ENCODE measurements at regions of chr16 and their contacts with region 1.

Region 1: DNA sequence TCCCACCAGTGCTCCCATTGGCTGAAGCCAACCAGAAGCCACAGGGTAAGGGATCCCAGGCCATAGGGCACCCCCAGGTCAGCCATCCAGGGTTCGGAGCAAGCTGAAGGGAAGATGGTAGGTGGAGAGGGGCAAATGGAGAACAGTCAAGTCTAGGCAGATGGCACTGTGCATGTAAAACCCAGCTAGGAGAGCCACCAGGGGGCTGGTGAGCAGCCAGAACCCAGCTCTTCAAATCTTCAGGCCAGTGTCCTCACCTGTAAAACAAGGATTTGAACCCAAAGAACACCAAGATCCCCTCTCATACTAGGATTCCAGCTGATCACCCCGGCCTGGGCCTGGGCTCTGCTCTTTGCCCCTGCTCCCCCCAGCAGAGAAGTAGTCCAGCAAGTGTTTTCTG is 43.5 kb downstream of the GINS3 start:
- DNase-seq: no peak
- H3K4me3 ChIP-seq: no peak overlapping the region
- H3K27ac ChIP-seq: no peak overlapping the region
- H3K4me1 ChIP-seq: no peaks in the 10 kb centered on the region
- H3K27me3 ChIP-seq: no peaks in the 10 kb centered on the region
- CTCF ChIP-seq: peak; percentile 27 to 45 (median 40); a peak in 3 of 4 replicates
- EP300 ChIP-seq: no peak
- POLR2A ChIP-seq: no peak
- RAD21 ChIP-seq: peak; percentile 9 to 43; a peak in 3 of 4 replicates

Region 2: GRCh38 chr16:58392215-58393137 is 43.3 kb before region 1 on chr16 and contains the start of gene GINS3:
- CTCF ChIA-PET with region 1: no interaction called
- POLR2A ChIA-PET with region 1: no interaction called
- DNase-seq: peak; percentile 58 to 91
- H3K4me3 ChIP-seq: peak within 1 kb of the TSS; percentile 83 to 100 (median 99)
- H3K27ac ChIP-seq: peak within 1 kb of the TSS; percentile 87
- H3K4me1 ChIP-seq: peaks cover 0 to 3% (median 0%) of the 10 kb centered on the region in 4 experiments; a peak in 2 of 7 replicates
- H3K27me3 ChIP-seq: peaks cover 0 to 11% (median 6%) of the 10 kb centered on the region in 4 experiments; a peak in 5 of 7 replicates
- CTCF ChIP-seq: no peak
- EP300 ChIP-seq: no peak
- POLR2A ChIP-seq: peak; percentile 38 to 85
- RAD21 ChIP-seq: no peak
- total RNA-seq, gene GINS3: 13.4 and 15.4 TPM in 2 replicates

Region 3: DNA sequence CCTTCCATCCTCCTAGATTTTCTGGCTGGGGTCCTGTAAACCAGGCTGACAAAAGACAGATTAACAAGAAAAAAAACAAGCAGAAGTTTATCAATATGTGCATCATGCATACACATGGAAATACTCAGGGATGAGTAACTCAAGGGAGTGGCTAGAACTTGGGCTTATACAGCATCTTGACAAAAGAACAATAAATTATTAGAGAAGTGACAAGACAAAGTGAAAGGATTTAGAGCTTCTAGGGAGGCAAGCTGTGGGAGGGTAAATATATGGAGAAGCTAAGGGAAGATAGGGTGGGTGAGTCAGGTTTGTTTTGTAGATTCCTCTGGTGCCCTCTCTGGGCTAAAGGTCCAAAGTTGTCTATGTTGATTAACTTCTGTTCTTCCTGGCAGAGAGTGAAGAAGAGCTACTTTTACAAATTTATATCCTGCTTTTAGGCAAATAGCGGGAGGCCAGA is 16.2 kb after region 1 on chr16:
- CTCF ChIA-PET with region 1: interaction called, 18 read pairs
- POLR2A ChIA-PET with region 1: no interaction called
- DNase-seq: no peak
- H3K4me3 ChIP-seq: no peak overlapping the region
- H3K27ac ChIP-seq: no peak overlapping the region
- H3K4me1 ChIP-seq: no peaks in the 10 kb centered on the region
- H3K27me3 ChIP-seq: no peaks in the 10 kb centered on the region; a peak in 1 of 7 replicates
- CTCF ChIP-seq: no peak
- EP300 ChIP-seq: no peak
- POLR2A ChIP-seq: no peak
- RAD21 ChIP-seq: no peak

Region 4: DNA sequence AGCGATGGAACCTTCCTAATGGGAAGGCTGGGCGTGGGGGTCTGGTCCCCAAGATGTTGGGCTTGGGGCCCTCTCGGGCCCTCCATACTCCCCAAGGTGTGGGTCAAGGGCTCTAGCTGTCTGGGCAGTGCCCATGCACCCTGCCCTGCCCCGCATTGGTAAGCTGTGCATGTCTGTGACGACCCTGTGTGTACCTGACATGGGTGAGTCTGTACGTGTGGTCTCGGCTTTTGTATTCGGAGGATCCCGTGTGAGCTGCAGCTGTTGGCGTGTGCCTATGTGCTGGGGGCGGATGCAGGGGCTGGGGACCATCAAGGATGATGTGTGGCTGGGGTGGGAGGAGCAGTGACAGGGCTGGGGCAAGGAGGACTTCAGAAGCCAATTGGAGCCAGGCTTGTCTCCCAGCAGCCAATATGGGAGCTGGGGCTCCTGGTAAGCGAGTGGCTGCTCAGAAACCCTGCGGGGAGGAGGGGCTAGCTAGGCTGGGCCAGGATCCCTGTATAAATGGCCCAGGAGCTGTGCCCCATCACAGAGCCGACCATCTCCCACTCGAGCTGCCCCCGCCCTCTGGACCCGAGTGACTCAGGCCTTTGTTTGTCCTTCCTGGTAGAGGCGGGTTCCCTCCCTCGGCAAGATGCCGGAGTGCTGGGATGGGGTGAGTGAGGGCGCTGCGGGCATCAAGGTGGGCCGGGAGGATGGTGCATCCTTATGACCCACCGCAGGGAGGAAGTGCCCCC is 64.0 kb after region 1 on chr16 and contains the start of gene NDRG4:
- CTCF ChIA-PET with region 1: no interaction called
- POLR2A ChIA-PET with region 1: no interaction called
- DNase-seq: peak; percentile 73 to 81
- H3K4me3 ChIP-seq: peak within 1 kb of the TSS; percentile 41 to 81 (median 70)
- H3K27ac ChIP-seq: no peak within 1 kb of the TSS
- H3K4me1 ChIP-seq: peaks cover 0 to 33% (median 23%) of the 10 kb centered on the region in 4 experiments; a peak in 6 of 7 replicates
- H3K27me3 ChIP-seq: peaks cover 0 to 8% (median 6%) of the 10 kb centered on the region in 4 experiments; a peak in 4 of 7 replicates
- CTCF ChIP-seq: no peak
- EP300 ChIP-seq: no peak
- POLR2A ChIP-seq: peak in 1 of 2 experiments; percentile 74; a peak in 2 of 3 replicates
- RAD21 ChIP-seq: no peak
- total RNA-seq, gene NDRG4: 18.9 and 20.8 TPM in 2 replicates